Activated B cell treated with CpG ODN at 0.5 μM for 24 hours (primary cell): ENCODE measurements at regions of chr1 and their contacts with region 1.

Region 1: DNA sequence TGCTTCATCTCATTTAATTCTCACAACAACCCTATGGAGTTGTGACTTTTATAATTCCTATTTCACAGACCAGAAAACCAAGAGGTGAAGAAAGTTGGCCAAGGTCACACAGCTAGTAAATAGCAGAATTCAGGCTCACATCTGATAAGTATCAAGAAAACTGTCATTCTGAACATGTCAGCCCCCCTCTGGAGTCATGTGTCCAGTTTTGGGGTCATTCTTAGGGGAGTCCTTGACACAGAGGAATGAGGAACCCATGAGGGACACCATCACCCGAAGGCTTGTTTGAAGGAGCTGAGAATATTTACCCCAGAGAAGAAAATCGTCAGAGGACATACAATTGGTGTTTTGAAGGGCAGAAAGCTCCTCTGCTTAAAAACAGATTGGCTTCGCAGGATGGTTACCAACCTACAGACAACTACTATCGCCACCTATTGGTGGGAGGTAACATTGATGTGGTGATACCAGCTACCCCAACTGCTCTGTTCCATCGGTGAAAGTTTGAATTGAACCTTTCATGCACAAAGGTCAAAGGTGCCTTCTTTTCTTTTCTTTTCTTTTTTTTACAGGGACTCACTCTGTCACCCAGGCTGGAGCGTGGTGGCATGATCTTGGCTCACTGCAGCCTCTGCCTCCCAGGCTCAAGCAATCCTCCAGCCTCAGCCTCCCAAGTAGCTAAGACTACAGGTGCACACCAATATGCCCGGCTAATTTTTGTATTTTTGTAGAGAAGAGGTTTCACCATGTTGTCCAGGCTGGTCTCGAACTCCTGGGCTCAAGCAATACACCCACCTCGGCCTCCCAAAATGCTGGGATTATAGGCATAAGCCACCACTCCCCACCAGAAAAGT is 31.3 kb downstream of the NCMAP start:
- DNase-seq: no peak
- ATAC-seq: peak; percentile 96
- H3K4me3 Mint-ChIP-seq: no peak overlapping the region
- H3K27ac Mint-ChIP-seq: no peak overlapping the region
- H3K4me1 Mint-ChIP-seq: peaks cover 4% of the 10 kb centered on the region
- H3K27me3 Mint-ChIP-seq: peaks cover 5% of the 10 kb centered on the region
- CTCF ChIP-seq: no peak

Region 2: GRCh38 chr1:24070821-24071393 is 516.3 kb before region 1 on chr1:
- CTCF ChIA-PET with region 1: interaction called, 4 read pairs
- POLR2A ChIA-PET with region 1: no interaction called
- intact Hi-C with region 1: loop called (anchors 1 kb)
- DNase-seq: peak; percentile 51
- ATAC-seq: peak; percentile 96
- H3K4me3 Mint-ChIP-seq: no peak overlapping the region
- H3K27ac Mint-ChIP-seq: no peak overlapping the region
- H3K4me1 Mint-ChIP-seq: no peaks in the 10 kb centered on the region
- H3K27me3 Mint-ChIP-seq: peaks cover 2% of the 10 kb centered on the region
- CTCF ChIP-seq: peak; percentile 85

Region 3: GRCh38 chr1:24142546-24143534 is 444.4 kb before region 1 on chr1 and contains the start of gene IL22RA1:
- CTCF ChIA-PET with region 1: no interaction called
- POLR2A ChIA-PET with region 1: no interaction called
- intact Hi-C with region 1: no loop called
- DNase-seq: no peak
- ATAC-seq: no peak
- H3K4me3 Mint-ChIP-seq: no peak within 1 kb of the TSS
- H3K27ac Mint-ChIP-seq: no peak within 1 kb of the TSS
- H3K4me1 Mint-ChIP-seq: peaks cover 3% of the 10 kb centered on the region
- H3K27me3 Mint-ChIP-seq: peaks cover 13% of the 10 kb centered on the region
- CTCF ChIP-seq: no peak
- total RNA-seq, gene IL22RA1: 0.09 TPM in 1 of 2 replicates, not detected in the other

Region 4: DNA sequence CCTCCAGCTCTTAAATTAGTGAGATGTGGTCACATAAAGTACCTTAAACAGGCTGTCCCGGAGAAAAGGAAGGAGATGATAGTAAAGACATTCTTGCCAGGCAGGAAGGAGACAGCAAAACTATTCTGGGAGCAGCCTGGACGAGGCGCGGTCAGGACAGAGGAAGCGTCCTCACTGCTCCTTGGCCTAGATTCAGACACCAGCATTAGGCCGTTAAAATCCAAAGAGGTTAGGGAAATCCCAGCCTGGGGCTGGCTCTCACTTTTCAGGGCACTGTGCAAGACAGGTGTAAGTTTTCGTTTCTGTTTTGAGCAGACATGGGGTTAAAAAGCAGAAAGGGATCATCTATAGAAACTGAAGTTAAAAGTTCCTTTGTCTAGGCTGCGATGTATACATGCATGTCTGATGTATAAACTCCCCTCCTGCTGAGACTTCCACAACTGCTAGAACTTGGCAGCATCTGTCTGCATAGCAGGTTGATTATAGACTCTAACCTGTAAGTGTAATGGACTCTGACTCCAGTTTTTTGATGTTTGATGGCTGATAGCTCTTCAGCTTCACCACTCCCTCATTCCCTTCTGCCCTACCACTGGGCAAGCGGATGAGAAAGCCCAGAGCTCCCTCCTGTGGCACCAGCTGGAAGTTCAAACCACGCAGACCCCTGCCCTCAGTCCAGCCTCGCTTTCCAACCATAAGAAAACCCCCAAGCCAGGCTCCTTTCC is 195.2 kb before region 1 on chr1:
- CTCF ChIA-PET with region 1: interaction called, 64 read pairs
- POLR2A ChIA-PET with region 1: no interaction called
- intact Hi-C with region 1: loop called (anchors 1 kb)
- DNase-seq: peak; percentile 56
- ATAC-seq: peak; percentile 77
- H3K4me3 Mint-ChIP-seq: peak overlapping the region; percentile 82
- H3K27ac Mint-ChIP-seq: peak overlapping the region; percentile 96
- H3K4me1 Mint-ChIP-seq: peaks cover 43% of the 10 kb centered on the region
- H3K27me3 Mint-ChIP-seq: no peaks in the 10 kb centered on the region
- CTCF ChIP-seq: no peak

Region 5: GRCh38 chr1:24468685-24469316 is 118.4 kb before region 1 on chr1:
- CTCF ChIA-PET with region 1: interaction called, 13 read pairs
- POLR2A ChIA-PET with region 1: no interaction called
- intact Hi-C with region 1: no loop called
- DNase-seq: no peak
- ATAC-seq: no peak
- H3K4me3 Mint-ChIP-seq: no peak overlapping the region
- H3K27ac Mint-ChIP-seq: no peak overlapping the region
- H3K4me1 Mint-ChIP-seq: peaks cover 5% of the 10 kb centered on the region
- H3K27me3 Mint-ChIP-seq: no peaks in the 10 kb centered on the region
- CTCF ChIP-seq: no peak

Region 6: DNA sequence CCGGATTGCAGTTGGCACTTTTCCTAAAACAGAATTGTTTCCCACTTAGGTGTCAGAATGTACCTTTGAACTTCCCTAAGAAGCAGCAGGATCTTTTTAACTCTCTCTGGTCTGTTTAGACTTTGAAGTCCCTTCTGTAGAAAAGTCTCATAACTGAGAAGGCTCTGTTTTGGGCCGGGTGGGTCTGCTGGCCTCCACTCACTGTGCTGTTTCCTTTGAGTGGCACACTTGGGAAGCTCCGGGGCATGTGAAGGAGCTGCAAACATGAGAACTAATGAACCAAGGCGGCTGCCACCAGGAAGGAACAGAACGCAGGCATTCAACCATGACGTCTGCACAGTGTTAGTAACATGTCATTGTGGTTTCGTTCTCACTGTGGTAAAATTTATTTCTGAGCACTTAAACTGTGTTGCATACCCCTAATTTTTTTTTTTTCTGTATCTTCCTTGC is 50.8 kb before region 1 on chr1:
- CTCF ChIA-PET with region 1: interaction called, 18 read pairs
- POLR2A ChIA-PET with region 1: interaction called, 4 read pairs
- intact Hi-C with region 1: loop called (anchors 5 kb)
- DNase-seq: peak; percentile 51
- ATAC-seq: peak; percentile 73
- H3K4me3 Mint-ChIP-seq: peak overlapping the region; percentile 81
- H3K27ac Mint-ChIP-seq: peak overlapping the region; percentile 99
- H3K4me1 Mint-ChIP-seq: peaks cover 74% of the 10 kb centered on the region
- H3K27me3 Mint-ChIP-seq: no peaks in the 10 kb centered on the region
- CTCF ChIP-seq: no peak

Region 7: GRCh38 chr1:24648919-24649318 is 61.7 kb after region 1 on chr1:
- CTCF ChIA-PET with region 1: no interaction called
- POLR2A ChIA-PET with region 1: no interaction called
- intact Hi-C with region 1: no loop called
- DNase-seq: no peak
- ATAC-seq: no peak
- H3K4me3 Mint-ChIP-seq: no peak overlapping the region
- H3K27ac Mint-ChIP-seq: no peak overlapping the region
- H3K4me1 Mint-ChIP-seq: peaks cover 27% of the 10 kb centered on the region
- H3K27me3 Mint-ChIP-seq: no peaks in the 10 kb centered on the region
- CTCF ChIP-seq: no peak

Region 8: DNA sequence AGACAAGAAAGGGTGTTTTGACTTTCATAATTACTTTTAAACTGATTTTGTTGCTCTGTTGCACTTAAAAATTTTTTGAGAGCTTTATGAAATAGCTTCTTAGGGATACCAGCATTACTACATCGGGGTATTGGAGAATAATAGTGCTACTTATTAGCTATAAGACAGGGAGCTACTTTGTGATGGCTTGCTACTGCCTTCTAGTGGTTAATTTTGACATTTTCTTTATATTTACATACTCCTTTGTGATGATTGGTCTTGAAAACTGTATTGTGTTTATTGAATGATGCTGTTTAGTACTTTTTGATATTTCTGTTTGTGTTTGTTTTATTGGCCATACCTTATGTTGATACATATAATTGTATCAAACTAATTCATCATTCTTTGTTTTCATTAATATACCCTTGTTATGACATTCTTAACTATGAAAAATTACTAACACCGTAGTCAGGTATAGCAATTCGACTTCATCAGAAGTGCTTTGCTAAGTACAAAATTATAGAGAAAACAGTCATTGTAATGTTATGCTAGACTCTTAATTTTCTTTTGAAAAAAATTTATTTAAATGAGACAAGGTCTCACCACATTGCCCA is 243.6 kb after region 1 on chr1:
- CTCF ChIA-PET with region 1: interaction called, 4 read pairs
- POLR2A ChIA-PET with region 1: no interaction called
- intact Hi-C with region 1: loop called (anchors 2 kb)
- DNase-seq: no peak
- ATAC-seq: peak; percentile 74
- H3K4me3 Mint-ChIP-seq: no peak overlapping the region
- H3K27ac Mint-ChIP-seq: no peak overlapping the region
- H3K4me1 Mint-ChIP-seq: peaks cover 46% of the 10 kb centered on the region
- H3K27me3 Mint-ChIP-seq: no peaks in the 10 kb centered on the region
- CTCF ChIP-seq: peak; percentile 51